Thyroid gland (tissue), 4 donors: ENCODE measurements at regions of chr20 and their contacts with region 1.

Region 1: GRCh38 chr20:1118336-1119127 is at the start of gene PSMF1:
- DNase-seq: peak; percentile 96 to 97
- H3K4me3 ChIP-seq: peak within 1 kb of the TSS; percentile 77 to 97 (median 96)
- H3K27ac ChIP-seq: peak within 1 kb of the TSS; percentile 67 to 87 (median 77)
- H3K4me1 ChIP-seq: peaks cover 46 to 47% of the 10 kb centered on the region in 2 donors
- H3K27me3 ChIP-seq: no peaks in the 10 kb centered on the region
- CTCF ChIP-seq: peak in 2 of 6 experiments; percentile 16 to 46
- POLR2A ChIP-seq: peak in 1 of 2 donors; percentile 67
- total RNA-seq, gene PSMF1: 74.8 to 189 (median 105) TPM

Region 2: DNA sequence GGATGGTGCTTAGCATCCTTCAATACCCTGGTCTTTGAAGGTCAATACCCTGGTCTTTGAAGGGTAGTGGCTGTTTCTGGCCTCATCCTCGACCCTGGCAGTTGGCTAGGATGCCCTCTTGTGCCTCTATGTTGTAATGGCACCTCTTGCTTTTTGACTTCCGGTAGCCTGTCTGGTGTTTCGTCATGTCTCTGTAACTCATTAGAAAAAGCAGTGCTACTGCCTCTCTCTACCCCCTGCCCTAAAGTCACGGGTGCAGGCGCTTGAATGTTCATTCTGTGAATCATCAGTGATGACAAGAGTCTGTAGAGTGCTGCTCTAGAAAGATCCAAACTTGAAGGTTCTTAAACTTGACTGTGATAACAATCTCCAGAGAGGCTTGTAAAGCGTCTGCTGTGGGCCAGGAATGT is 144.7 kb before region 1 on chr20:
- intact Hi-C with region 1: loop called (anchors 10 kb)
- DNase-seq: peak; percentile 88 to 92
- H3K4me3 ChIP-seq: no peak overlapping the region
- H3K27ac ChIP-seq: peak overlapping the region; percentile 61 to 86 (median 80)
- H3K4me1 ChIP-seq: peaks cover 21 to 37% of the 10 kb centered on the region in 2 donors
- H3K27me3 ChIP-seq: no peaks in the 10 kb centered on the region
- CTCF ChIP-seq: peak in 5 of 6 experiments; percentile 20 to 74 (median 66)
- POLR2A ChIP-seq: no peak

Region 3: DNA sequence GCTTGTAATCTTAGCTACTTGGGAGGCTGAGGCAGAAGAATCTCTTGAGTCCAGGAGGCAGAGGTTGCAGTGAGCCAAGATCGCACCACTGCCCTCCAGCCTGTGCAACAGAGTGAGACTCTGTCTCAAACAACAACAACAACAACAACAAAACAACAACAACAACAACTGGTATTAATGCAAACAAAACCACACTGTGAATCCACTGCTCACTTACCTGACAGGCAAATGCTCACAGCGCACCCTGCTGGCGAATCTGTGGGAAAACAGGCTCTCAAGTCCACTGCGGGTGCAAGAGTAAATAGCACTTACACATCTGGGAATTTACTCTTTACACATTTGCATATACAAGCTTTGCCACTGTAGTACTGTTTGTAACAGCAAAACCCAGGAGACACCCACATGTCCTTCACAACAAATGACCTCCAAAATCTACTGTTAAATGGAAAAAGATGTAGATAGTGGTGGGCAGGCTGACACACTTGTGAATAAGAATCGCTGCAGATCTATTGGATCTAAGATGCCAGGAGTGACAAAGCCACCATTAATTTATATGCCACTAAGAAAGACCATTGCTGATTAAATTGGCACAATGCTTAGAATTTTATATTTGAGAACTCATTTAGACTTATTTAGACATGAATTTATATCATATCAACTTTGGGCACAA is 318.8 kb after region 1 on chr20:
- intact Hi-C with region 1: no loop called
- DNase-seq: peak; percentile 58 to 76
- H3K4me3 ChIP-seq: no peak overlapping the region
- H3K27ac ChIP-seq: no peak overlapping the region
- H3K4me1 ChIP-seq: no peaks in the 10 kb centered on the region
- H3K27me3 ChIP-seq: no peaks in the 10 kb centered on the region
- CTCF ChIP-seq: peak; percentile 60 to 92 (median 74)
- POLR2A ChIP-seq: no peak

Region 4: DNA sequence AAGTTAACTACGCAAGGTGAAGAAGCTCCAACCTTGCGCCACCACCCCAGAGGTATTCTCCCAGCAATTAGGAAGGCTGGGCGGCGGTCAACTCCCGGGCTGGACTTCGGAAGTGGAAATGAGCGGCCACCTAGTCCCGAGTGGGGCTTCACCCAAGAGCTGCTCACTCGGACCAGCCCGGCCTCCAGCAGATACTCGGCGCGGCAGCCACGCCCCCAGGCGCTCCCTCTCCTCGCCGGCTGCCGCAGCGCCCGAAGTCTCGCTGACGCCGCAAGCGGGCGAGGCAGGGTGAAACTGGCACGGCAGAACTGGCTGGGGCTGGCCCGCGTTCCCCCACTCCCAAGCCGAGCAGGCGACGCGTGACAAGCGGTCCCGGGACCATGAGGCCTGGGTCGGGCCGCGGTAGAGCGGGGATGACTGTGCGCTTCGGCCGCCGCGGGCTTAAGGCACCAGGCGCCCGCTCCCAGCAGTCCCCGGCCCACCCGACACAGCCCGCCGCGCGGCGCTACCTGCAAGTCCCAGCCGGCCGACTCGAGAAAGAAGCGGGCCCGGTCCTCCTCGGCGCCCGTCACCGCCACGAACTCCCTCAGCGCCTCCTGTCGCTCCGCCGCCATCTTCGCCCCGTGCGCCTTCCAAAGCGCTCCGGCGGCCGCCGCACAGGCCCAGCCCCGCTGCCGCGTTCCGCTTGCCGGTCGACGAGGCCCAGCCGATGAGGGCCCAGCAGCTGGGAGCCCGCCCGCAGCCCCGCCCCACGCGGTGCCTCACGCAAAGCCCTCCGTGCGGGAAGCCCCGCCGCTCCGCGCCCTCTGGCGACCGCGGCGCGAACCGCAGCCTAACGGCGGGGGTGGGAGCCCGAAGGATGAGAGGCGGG is 347.9 kb after region 1 on chr20 and contains the start of gene NSFL1C:
- intact Hi-C with region 1: loop called (anchors 10 kb)
- DNase-seq: peak; percentile 96 to 97
- H3K4me3 ChIP-seq: peak within 1 kb of the TSS; percentile 90 to 99 (median 98)
- H3K27ac ChIP-seq: peak within 1 kb of the TSS; percentile 70 to 89 (median 77)
- H3K4me1 ChIP-seq: peaks cover 15 to 40% of the 10 kb centered on the region in 2 donors
- H3K27me3 ChIP-seq: no peaks in the 10 kb centered on the region
- CTCF ChIP-seq: peak; percentile 45 to 100 (median 99)
- POLR2A ChIP-seq: peak in 1 of 2 donors; percentile 69
- total RNA-seq, gene NSFL1C: 42.2 to 51.3 (median 48.8) TPM